Posterior vena cava (tissue), 2 donors: ENCODE measurements at regions of chr13 and their contacts with region 1.

Region 1: GRCh38 chr13:20760872-20761271 is 12.9 kb downstream of the EEF1AKMT1 start:
- DNase-seq: no peak

Region 2: GRCh38 chr13:20495082-20496023 is 265.5 kb before region 1 on chr13:
- intact Hi-C with region 1: no loop called
- DNase-seq: no peak

Region 3: GRCh38 chr13:20728579-20729311 is 32.1 kb before region 1 on chr13:
- intact Hi-C with region 1: loop called in 1 of 2 experiments (anchors 5 kb)
- DNase-seq: no peak

Region 4: DNA sequence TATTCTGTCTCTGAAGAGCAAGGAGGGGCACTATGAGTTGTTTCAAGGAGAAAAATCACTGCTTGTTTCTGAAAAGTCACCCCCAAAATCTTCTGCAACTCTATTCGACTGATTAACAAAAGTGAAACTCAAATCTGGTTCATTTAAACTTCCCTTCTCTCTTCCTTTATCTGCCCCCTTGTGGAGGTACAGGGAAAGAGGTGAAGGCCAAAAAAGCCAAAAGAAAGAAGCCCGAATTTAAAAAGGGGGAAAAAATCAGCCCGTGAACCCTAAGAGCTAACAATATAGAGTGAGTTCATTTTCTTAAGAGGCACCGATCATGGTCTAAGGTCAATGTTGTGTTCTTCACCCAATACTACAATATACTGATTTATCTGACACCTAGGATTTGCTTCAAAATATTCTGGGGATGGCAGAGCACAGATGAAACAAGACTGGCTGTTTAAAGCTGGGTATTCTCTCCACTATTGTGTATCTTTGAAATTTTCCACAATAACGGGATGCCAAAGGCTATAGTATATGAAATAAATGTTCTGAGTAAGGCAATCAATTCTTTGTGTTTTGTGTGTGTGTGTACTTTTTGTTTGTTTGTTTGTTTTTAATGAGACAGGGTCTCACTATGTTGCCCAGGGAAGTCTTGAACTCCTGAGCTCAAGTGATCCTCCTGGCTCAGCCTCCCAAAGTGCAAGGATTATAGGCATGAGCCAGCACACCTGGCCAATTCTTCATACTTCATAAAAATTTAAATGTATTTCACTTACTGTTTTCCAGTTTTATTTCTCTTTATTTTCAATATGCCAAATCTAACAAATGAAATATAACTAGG is 67.9 kb after region 1 on chr13:
- intact Hi-C with region 1: no loop called
- DNase-seq: no peak

Region 5: DNA sequence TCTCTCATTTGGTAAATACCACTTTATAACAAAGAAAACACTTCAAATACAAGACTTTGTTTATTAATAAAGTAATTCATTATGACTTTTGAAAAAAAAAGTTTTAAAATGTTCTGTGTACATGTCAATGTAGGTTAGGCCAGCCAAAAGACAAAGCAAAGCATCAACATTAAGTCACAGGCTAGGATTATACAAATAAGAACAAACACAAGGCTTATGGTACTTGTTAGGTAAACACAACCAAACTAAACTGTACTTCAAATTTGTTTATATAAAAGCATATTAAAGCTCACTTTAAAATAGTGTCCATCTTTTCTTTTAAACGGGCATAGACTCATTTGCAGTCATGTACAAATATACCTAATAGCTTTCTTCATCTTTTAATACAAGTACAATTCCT is 611.7 kb after region 1 on chr13:
- intact Hi-C with region 1: no loop called
- DNase-seq: no peak